Naive thymus-derived CD4-positive, alpha-beta T cell (primary cell): ENCODE measurements at regions of chr1 and their contacts with region 1.

Region 1: DNA sequence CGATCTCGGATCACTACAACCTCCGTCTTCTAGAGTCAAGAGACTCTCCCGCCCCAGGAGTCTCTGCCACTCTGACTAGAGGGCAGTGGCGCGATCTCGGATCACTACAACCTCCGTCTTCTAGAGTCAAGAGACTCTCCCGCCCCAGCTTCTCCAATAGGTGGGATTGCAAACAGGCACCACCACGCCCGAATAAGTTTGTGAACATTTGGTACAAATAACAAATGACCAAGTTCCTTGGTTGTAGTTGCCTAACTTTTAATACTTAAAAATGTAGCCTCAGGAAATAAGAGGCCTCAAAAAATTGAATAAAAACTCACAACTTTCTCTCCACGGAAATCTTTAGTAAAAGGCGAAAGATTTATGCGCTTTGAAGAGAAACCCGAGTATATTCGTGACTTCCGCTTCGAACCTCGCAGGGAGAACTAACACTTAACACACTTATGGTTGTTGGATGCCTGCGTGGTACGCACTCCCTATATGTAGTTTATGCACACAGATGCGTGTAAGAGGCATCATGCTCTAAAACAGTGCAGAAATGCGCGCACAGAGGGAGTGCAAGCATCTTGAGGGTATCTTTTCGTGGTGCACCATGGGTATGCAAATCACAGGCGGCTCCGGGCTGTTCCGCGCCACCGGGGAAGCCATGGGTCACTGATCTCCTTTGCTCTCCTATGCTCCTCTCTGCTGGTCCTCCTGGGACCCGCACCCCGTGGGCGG is 11.4 kb downstream of the BTBD19 start:
- DNase-seq: peak; percentile 75 to 91 (median 86)
- ATAC-seq: peak; percentile 86
- H3K4me3 ChIP-seq: peak overlapping the region; percentile 66
- H3K4me3 Mint-ChIP-seq: peak overlapping the region; percentile 91 to 96 (median 94)
- H3K27ac ChIP-seq: peak overlapping the region; percentile 92
- H3K27ac Mint-ChIP-seq: peak overlapping the region; percentile 99 to 100 (median 100)
- H3K4me1 ChIP-seq: peaks cover 0 to 21% of the 10 kb centered on the region in 2 donors
- H3K4me1 Mint-ChIP-seq: peaks cover 31 to 48% (median 45%) of the 10 kb centered on the region in 7 donors
- H3K27me3 ChIP-seq: no peaks in the 10 kb centered on the region
- H3K27me3 Mint-ChIP-seq: no peaks in the 10 kb centered on the region

Region 2: GRCh38 chr1:44786138-44786840 is 33.5 kb before region 1 on chr1:
- CTCF ChIA-PET with region 1: interaction called, 7 read pairs
- POLR2A ChIA-PET with region 1: interaction called, 52 read pairs
- intact Hi-C with region 1: loop called (anchors 1 to 5 kb)
- DNase-seq: peak; percentile 69 to 85 (median 76)
- ATAC-seq: peak; percentile 90
- H3K4me3 ChIP-seq: peak overlapping the region; percentile 64
- H3K4me3 Mint-ChIP-seq: peak overlapping the region; percentile 60 to 82 (median 75)
- H3K27ac ChIP-seq: peak overlapping the region; percentile 58
- H3K27ac Mint-ChIP-seq: peak overlapping the region in 8 of 9 donors; percentile 51 to 80 (median 72)
- H3K4me1 ChIP-seq: peaks cover 20 to 25% of the 10 kb centered on the region in 2 donors
- H3K4me1 Mint-ChIP-seq: peaks cover 13 to 35% (median 27%) of the 10 kb centered on the region in 7 donors
- H3K27me3 ChIP-seq: no peaks in the 10 kb centered on the region
- H3K27me3 Mint-ChIP-seq: no peaks in the 10 kb centered on the region

Region 3: DNA sequence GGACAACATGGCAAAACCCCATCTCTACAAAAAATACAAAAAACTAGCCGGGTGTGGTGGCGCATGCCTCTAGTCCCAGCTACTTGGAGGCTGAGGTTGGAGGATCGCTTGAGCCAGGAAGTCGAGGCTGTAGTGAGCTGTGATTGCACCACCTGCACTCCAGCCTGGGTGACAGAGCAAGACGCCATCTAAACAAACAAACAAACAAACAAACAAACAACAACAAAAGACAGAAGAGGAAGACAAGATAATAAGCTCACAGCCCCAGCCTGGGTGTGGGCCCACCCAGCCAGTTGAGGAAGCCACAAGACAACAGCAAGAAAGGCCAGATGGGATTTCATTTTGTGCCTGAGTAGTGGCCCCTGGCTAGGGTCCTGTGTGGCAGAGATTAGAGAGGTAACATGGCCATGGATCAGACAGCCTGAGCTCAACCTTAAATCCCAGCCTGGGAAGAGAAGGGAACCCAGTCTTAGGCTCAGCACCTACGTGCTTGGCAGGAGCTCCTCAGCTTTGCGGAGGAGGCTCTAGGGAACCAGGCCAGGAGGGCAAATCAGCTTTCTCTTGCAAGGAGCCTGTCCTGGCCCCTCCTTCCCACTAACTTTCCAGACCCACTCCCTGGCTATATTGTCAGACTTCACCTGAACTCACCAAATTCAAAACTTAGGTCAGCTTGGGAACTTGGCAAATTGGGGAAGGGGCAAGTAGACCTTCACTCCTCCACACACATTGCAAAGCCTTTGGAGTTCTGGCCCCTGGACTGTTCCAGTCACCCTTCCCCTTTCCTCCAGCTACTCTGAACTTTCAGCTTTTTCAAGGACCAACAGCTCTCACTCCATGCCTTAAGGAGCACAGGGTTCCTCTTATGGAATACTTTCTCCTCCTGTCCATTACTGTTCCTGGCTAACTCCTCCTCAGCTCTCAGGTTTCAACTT is 26.7 kb before region 1 on chr1:
- CTCF ChIA-PET with region 1: interaction called, 4 read pairs
- POLR2A ChIA-PET with region 1: interaction called, 709 read pairs
- intact Hi-C with region 1: loop called in 1 of 2 experiments (anchors 5 kb)
- DNase-seq: no peak
- ATAC-seq: peak; percentile 3
- H3K4me3 ChIP-seq: no peak overlapping the region
- H3K4me3 Mint-ChIP-seq: no peak overlapping the region
- H3K27ac ChIP-seq: no peak overlapping the region
- H3K27ac Mint-ChIP-seq: peak overlapping the region in 2 of 9 donors; percentile 31 to 40
- H3K4me1 ChIP-seq: no peaks in the 10 kb centered on the region
- H3K4me1 Mint-ChIP-seq: peaks cover 0 to 5% (median 2%) of the 10 kb centered on the region in 7 donors
- H3K27me3 ChIP-seq: no peaks in the 10 kb centered on the region
- H3K27me3 Mint-ChIP-seq: no peaks in the 10 kb centered on the region

Region 4: GRCh38 chr1:44807262-44808062 is 12.3 kb before region 1 on chr1 and contains the start of gene DYNLT4:
- CTCF ChIA-PET with region 1: interaction called, 44 read pairs
- POLR2A ChIA-PET with region 1: interaction called, 709 read pairs
- intact Hi-C with region 1: loop called (anchors 1 kb)
- DNase-seq: peak; percentile 78 to 96 (median 95)
- ATAC-seq: peak; percentile 68
- H3K4me3 ChIP-seq: peak within 1 kb of the TSS; percentile 48
- H3K4me3 Mint-ChIP-seq: peak within 1 kb of the TSS; percentile 63 to 90 (median 80)
- H3K27ac ChIP-seq: peak within 1 kb of the TSS; percentile 91
- H3K27ac Mint-ChIP-seq: peak within 1 kb of the TSS; percentile 98 to 100 (median 99)
- H3K4me1 ChIP-seq: peaks cover 66 to 67% of the 10 kb centered on the region in 2 donors
- H3K4me1 Mint-ChIP-seq: peaks cover 53 to 84% (median 77%) of the 10 kb centered on the region in 7 donors
- H3K27me3 ChIP-seq: no peaks in the 10 kb centered on the region
- H3K27me3 Mint-ChIP-seq: peaks cover 0 to 3% (median 0%) of the 10 kb centered on the region in 5 donors
- total RNA-seq, gene DYNLT4: 0.31 to 9.7 (median 0.87) TPM

Region 5: GRCh38 chr1:44985747-44986359 is 166.1 kb after region 1 on chr1:
- CTCF ChIA-PET with region 1: interaction called, 5 read pairs
- POLR2A ChIA-PET with region 1: interaction called, 10 read pairs
- intact Hi-C with region 1: no loop called
- DNase-seq: no peak
- ATAC-seq: no peak
- H3K4me3 ChIP-seq: peak overlapping the region; percentile 77
- H3K4me3 Mint-ChIP-seq: peak overlapping the region; percentile 90 to 100 (median 98)
- H3K27ac ChIP-seq: peak overlapping the region; percentile 68
- H3K27ac Mint-ChIP-seq: peak overlapping the region; percentile 75 to 99 (median 92)
- H3K4me1 ChIP-seq: peaks cover 8 to 13% of the 10 kb centered on the region in 2 donors
- H3K4me1 Mint-ChIP-seq: peaks cover 7 to 39% (median 23%) of the 10 kb centered on the region in 7 donors
- H3K27me3 ChIP-seq: no peaks in the 10 kb centered on the region
- H3K27me3 Mint-ChIP-seq: no peaks in the 10 kb centered on the region